MCF 10A (cell line): ENCODE measurements at regions of chr1 and their contacts with region 1.

Region 1: DNA sequence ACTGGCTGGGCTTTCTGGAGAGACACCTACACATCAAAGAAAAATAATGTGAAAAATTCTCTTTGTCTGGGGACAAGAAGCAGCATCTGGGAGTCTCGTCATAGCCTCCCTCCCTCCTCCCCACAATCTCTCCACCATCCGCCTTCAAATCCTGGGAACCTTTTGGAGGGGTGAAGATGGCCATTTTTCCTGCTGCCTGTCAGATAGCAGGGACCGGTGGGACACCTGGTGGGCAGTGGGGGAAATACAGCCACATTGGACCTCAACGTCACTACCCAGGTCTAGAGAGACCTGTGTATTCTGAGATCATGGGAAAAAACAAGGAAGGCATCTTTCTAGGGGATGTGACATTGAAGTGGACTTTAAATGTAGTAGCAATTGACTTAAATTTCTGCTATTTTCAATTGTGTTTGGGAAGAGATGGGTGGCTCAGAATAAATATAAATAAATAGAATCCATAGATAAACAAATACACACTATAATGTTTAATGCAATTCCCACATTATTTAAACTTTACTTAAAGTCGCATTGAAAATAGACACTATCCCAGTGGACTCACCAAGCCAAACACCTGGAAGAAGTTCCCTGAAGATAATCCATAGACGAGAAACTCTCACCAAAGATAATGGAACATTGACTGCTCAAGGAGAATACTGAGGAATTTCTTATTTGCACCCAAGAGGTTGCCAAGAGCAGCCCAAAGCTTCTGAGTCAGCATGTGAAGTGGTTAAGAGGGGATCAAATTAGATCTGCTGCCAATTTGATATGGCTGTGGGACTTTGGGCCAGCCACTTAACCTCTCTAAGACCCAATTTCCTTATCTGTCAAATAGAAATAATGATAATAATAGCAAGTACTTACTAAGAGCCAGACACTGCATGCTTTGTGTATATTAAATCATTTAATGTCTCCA is 147.6 kb upstream of the CAMK1G start:
- DNase-seq: peak; percentile 97
- H3K4me3 Mint-ChIP-seq: no peak overlapping the region
- H3K27ac Mint-ChIP-seq: peak overlapping the region; percentile 90
- H3K4me1 Mint-ChIP-seq: peaks cover 51% of the 10 kb centered on the region
- H3K27me3 Mint-ChIP-seq: no peaks in the 10 kb centered on the region
- CTCF ChIP-seq: peak; percentile 100

Region 2: GRCh38 chr1:208997726-208998312 is 438.1 kb before region 1 on chr1:
- CTCF ChIA-PET with region 1: no interaction called
- POLR2A ChIA-PET with region 1: no interaction called
- intact Hi-C with region 1: loop called (anchors 10 kb)
- DNase-seq: peak; percentile 70
- H3K4me3 Mint-ChIP-seq: no peak overlapping the region
- H3K27ac Mint-ChIP-seq: no peak overlapping the region
- H3K4me1 Mint-ChIP-seq: no peaks in the 10 kb centered on the region
- H3K27me3 Mint-ChIP-seq: no peaks in the 10 kb centered on the region
- CTCF ChIP-seq: peak; percentile 82

Region 3: DNA sequence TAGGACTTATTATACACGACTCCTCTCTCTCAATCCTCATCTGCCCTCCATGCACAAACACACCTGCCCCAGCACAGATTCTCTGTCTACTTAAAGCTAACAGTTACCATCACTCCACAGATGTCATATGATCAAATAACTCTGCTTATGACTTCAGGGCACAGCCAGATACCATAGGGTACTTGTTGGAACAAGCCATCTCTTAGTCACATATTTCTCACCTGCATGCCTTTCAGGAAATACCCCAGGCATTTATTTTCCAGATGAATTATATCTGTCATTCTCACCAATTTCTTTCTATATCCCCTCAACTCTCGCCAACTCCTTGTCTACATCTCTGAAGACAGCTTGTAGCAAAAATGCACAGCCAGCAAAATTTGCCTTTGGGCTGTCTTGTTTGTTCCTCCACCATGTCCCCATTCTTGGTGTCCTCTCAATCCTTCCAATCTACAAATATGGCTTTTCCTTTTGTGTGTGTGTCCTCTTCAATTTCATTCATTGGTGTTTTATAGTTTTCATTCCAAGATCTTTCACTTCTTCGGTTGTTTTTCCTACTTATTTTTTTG is 206.3 kb before region 1 on chr1:
- CTCF ChIA-PET with region 1: no interaction called
- POLR2A ChIA-PET with region 1: interaction called, 15 read pairs
- intact Hi-C with region 1: no loop called
- DNase-seq: peak; percentile 87
- H3K4me3 Mint-ChIP-seq: no peak overlapping the region
- H3K27ac Mint-ChIP-seq: no peak overlapping the region
- H3K4me1 Mint-ChIP-seq: peaks cover 13% of the 10 kb centered on the region
- H3K27me3 Mint-ChIP-seq: no peaks in the 10 kb centered on the region
- CTCF ChIP-seq: no peak

Region 4: GRCh38 chr1:209398313-209398991 is 37.5 kb before region 1 on chr1:
- CTCF ChIA-PET with region 1: interaction called, 368 read pairs
- POLR2A ChIA-PET with region 1: interaction called, 2,930 read pairs
- intact Hi-C with region 1: loop called (anchors 1 kb)
- DNase-seq: peak; percentile 100
- H3K4me3 Mint-ChIP-seq: peak overlapping the region; percentile 29
- H3K27ac Mint-ChIP-seq: peak overlapping the region; percentile 79
- H3K4me1 Mint-ChIP-seq: peaks cover 28% of the 10 kb centered on the region
- H3K27me3 Mint-ChIP-seq: no peaks in the 10 kb centered on the region
- CTCF ChIP-seq: no peak

Region 5: DNA sequence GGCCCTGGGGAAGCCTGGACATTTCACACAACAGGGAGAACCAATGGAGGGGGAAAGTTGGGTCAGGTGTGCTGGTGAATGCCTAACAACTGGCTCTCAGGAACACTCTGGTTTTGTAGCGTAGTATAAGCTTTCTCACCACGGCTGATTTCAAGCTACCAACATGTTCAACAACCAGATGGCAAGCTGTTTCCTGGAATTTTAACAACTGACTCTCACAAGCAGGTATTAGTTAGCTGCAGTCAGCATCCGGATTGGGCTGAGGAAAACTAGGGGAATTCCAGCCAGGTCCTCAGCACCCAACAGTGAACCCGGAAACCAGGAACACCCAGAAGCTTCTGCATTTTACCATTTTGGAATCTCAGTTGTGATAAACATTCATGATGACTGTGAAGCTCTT is 14.7 kb before region 1 on chr1:
- CTCF ChIA-PET with region 1: interaction called, 368 read pairs
- POLR2A ChIA-PET with region 1: interaction called, 2,930 read pairs
- intact Hi-C with region 1: no loop called
- DNase-seq: no peak
- H3K4me3 Mint-ChIP-seq: no peak overlapping the region
- H3K27ac Mint-ChIP-seq: peak overlapping the region; percentile 9
- H3K4me1 Mint-ChIP-seq: peaks cover 33% of the 10 kb centered on the region
- H3K27me3 Mint-ChIP-seq: no peaks in the 10 kb centered on the region
- CTCF ChIP-seq: no peak

Region 6: DNA sequence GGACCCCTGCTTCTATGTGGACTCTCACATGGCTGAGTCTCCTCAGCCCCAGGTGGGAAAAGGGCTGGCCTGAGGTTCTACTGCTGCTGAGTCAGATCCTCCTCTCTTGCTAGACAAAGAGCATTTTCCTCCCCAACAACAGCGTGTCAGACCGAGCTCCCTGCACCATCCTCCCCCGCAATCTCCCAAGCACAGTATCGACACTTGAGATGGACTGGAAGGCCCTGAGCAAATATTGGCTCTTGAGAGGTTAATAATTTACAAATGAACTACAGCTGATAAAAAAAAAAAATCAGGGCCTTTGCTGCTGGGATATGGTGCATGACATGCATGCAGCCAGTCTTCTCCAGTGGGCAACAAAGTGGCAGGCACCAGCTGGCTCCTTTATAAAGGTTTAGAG is 92.1 kb after region 1 on chr1:
- CTCF ChIA-PET with region 1: interaction called, 3 read pairs
- POLR2A ChIA-PET with region 1: interaction called, 86 read pairs
- intact Hi-C with region 1: no loop called
- DNase-seq: peak; percentile 36
- H3K4me3 Mint-ChIP-seq: no peak overlapping the region
- H3K27ac Mint-ChIP-seq: peak overlapping the region; percentile 60
- H3K4me1 Mint-ChIP-seq: peaks cover 64% of the 10 kb centered on the region
- H3K27me3 Mint-ChIP-seq: no peaks in the 10 kb centered on the region
- CTCF ChIP-seq: no peak